Activated T-helper 2 cell treated with anti-CD3 and anti-CD28 coated beads, Interferon-gamma antibody, Interleukin-2, Interleukin-4, amounts not matched to agents 10 μg/mL and 5 μg/mL and 100 μg/mL, durations not matched to agents 14 hours and 24 hours and 36 hours (primary cell): ENCODE measurements at regions of chr6 and their contacts with region 1.

Region 1: GRCh38 chr6:45421709-45422502 is 44.2 kb upstream of the SUPT3H start:
- DNase-seq: peak; percentile 64
- H3K4me3 Mint-ChIP-seq: peak overlapping the region; percentile 100
- H3K27ac Mint-ChIP-seq: peak overlapping the region; percentile 99
- H3K4me1 Mint-ChIP-seq: peaks cover 45% of the 10 kb centered on the region
- H3K27me3 Mint-ChIP-seq: no peaks in the 10 kb centered on the region

Region 2: GRCh38 chr6:44642870-44643529 is 778.9 kb before region 1 on chr6:
- intact Hi-C with region 1: loop called (anchors 5 kb)
- DNase-seq: peak; percentile 39
- H3K4me3 Mint-ChIP-seq: no peak overlapping the region
- H3K27ac Mint-ChIP-seq: peak overlapping the region; percentile 91
- H3K4me1 Mint-ChIP-seq: peaks cover 31% of the 10 kb centered on the region
- H3K27me3 Mint-ChIP-seq: no peaks in the 10 kb centered on the region

Region 3: GRCh38 chr6:44932651-44933091 is 489.2 kb before region 1 on chr6:
- intact Hi-C with region 1: loop called (anchors 5 kb)
- DNase-seq: no peak
- H3K4me3 Mint-ChIP-seq: peak overlapping the region; percentile 78
- H3K27ac Mint-ChIP-seq: peak overlapping the region; percentile 93
- H3K4me1 Mint-ChIP-seq: peaks cover 48% of the 10 kb centered on the region
- H3K27me3 Mint-ChIP-seq: no peaks in the 10 kb centered on the region

Region 4: DNA sequence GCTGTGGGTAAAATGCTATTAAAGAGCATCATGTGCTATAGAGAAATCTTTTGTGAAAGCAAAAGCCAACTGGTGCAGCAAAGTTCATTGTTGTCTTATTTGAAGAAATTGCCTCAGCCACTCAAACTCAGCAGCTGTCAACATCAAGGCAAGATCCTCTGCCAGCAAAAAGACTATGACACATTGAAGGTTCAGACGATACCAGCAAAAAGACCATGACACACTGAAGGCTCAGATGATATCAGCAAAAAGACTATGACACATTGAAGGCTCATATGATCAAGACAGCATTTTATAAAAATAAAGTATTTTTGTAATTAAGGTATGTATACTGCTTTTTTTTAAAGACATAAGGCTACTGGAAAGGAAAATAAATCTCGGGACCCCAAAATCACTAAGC is 212.1 kb before region 1 on chr6:
- intact Hi-C with region 1: loop called (anchors 5 kb)
- DNase-seq: no peak
- H3K4me3 Mint-ChIP-seq: no peak overlapping the region
- H3K27ac Mint-ChIP-seq: peak overlapping the region; percentile 47
- H3K4me1 Mint-ChIP-seq: peaks cover 50% of the 10 kb centered on the region
- H3K27me3 Mint-ChIP-seq: no peaks in the 10 kb centered on the region

Region 5: DNA sequence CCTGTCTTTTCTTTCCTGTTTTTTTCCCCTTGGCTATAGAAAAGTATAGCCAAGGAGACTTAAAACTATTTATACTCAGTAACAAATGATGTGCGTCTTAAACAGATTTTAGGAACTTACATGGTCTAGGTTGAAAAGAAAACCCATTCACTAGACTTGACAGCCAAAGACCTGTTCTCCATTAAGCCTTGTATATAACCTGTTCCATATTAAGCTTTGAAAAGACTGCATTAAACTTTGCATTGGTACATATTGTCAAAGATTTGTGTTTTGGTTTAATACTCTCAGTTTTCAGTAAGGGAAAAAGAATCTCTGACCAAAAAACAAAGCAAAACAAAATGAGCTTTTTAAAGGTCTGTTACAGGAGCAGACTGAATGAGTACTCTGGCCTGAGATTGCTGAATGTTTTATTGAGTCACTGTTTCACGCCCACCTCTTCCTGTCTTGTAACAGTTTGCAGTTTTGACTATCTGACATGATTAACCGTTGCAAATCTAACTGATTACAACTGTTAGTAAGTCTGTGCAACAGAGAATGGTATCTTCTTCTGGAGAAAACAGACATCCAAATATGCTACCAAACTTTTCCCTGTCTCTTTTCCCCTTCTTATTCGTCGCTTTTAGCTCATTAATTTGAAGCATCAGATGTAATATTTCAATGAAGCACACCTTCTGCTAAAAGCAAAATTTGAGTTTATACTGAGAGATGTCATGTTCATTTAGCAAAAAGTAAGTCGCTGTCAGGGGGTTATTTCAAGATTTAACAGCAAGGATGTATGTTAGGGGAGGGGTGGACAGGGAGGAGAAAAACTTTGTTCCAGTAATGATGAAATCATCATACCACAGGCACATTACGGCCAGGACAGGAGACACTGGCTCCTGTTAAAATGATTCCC is 14.9 kb after region 1 on chr6:
- intact Hi-C with region 1: loop called (anchors 1 kb)
- DNase-seq: no peak
- H3K4me3 Mint-ChIP-seq: peak overlapping the region; percentile 82
- H3K27ac Mint-ChIP-seq: peak overlapping the region; percentile 98
- H3K4me1 Mint-ChIP-seq: peaks cover 84% of the 10 kb centered on the region
- H3K27me3 Mint-ChIP-seq: no peaks in the 10 kb centered on the region

Region 6: DNA sequence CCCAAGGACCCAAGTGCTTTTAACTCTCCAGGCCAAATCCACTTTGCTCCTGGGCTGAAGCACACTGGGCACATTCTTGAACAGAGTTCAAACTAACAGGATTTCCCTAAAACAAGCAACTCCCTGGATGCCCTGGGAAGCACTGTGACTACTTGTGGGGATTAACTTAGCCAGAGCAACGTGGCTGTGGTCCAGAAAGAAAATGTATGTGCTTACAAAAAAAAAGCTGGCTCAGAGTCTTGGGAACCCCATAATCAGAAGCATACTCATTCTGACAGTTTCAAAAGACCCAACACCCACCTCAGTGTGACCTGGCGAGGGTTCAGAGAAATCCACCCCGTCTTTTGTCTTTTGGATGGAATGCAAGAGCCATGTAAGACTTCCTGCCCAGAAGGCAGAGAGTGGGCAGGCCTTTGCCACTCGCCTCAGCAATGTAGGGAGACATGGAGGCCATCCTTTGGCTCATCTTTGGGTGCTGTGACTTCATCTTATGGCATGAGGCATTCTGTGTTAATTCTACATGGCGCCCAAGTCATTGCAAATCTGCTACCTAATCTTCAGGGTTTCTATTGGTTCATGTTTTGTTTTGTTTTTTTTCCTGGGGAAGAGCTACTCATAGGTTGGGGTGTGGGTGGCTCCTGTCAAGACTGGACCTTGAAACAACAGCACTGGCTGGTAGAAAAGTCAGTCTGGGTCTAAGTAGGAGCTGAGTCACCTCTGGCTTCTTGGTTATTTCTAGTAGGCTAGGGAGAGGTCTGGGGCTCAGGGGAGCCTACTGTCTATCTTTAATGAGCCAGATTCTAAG is 204.4 kb after region 1 on chr6:
- intact Hi-C with region 1: loop called (anchors 1 kb)
- DNase-seq: no peak
- H3K4me3 Mint-ChIP-seq: no peak overlapping the region
- H3K27ac Mint-ChIP-seq: peak overlapping the region; percentile 86
- H3K4me1 Mint-ChIP-seq: peaks cover 61% of the 10 kb centered on the region
- H3K27me3 Mint-ChIP-seq: no peaks in the 10 kb centered on the region

Region 7: GRCh38 chr6:46011241-46012085 is 589.6 kb after region 1 on chr6:
- intact Hi-C with region 1: loop called (anchors 5 kb)
- DNase-seq: peak; percentile 75
- H3K4me3 Mint-ChIP-seq: peak overlapping the region; percentile 30
- H3K27ac Mint-ChIP-seq: peak overlapping the region; percentile 80
- H3K4me1 Mint-ChIP-seq: peaks cover 58% of the 10 kb centered on the region
- H3K27me3 Mint-ChIP-seq: peaks cover 24% of the 10 kb centered on the region